Left cardiac atrium (tissue), 4 donors: ENCODE measurements at regions of chr7 and their contacts with region 1.

Region 1: GRCh38 chr7:90346336-90347125 is at the start of gene GTPBP10:
- DNase-seq: peak; percentile 96
- ATAC-seq: peak; percentile 100
- total RNA-seq, gene GTPBP10: 17.8 to 24.3 TPM

Region 2: GRCh38 chr7:89332026-89332425 is 1014.5 kb before region 1 on chr7:
- intact Hi-C with region 1: no loop called
- DNase-seq: no peak
- ATAC-seq: no peak

Region 3: GRCh38 chr7:90165724-90166123 is 180.8 kb before region 1 on chr7:
- intact Hi-C with region 1: no loop called
- DNase-seq: no peak
- ATAC-seq: no peak

Region 4: DNA sequence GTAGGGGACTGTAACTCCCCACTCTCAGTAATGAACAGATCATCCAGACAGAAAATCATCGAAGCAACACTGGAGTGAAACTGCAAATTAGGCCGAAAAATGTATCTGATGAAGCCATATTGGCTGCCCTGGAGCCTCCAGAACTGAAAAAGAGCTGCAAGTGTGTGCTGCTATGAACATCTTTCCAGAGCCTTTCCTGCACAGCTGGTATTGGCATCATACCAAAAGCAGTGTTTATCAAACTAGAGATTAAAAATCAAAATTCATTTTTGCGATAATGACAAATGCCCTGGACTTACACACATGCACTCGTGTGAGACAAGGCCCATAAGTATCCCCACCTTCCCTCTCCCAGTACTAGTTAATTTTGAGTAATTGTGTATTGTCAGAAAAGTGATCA is 49.9 kb after region 1 on chr7:
- intact Hi-C with region 1: loop called (anchors 5 to 10 kb)
- DNase-seq: no peak
- ATAC-seq: no peak

Region 5: GRCh38 chr7:90403174-90404113 is 56.9 kb after region 1 on chr7 and contains the start of gene CLDN12:
- intact Hi-C with region 1: loop called (anchors 5 to 10 kb)
- DNase-seq: peak; percentile 89
- ATAC-seq: peak; percentile 95 to 99
- total RNA-seq, gene CLDN12: 31.8 to 35.5 TPM